ENCODE measurements at regions of chr16 and their contacts with region 1.

Region 1: GRCh38 chr16:68756250-68756915 is 19.3 kb downstream of the CDH1 start:
- DNase-seq: peak; percentile 86
- H3K4me3 Mint-ChIP-seq: peak overlapping the region; percentile 45
- H3K27ac Mint-ChIP-seq: peak overlapping the region; percentile 99
- H3K4me1 Mint-ChIP-seq: peaks cover 54% of the 10 kb centered on the region
- H3K27me3 Mint-ChIP-seq: no peaks in the 10 kb centered on the region

Region 2: DNA sequence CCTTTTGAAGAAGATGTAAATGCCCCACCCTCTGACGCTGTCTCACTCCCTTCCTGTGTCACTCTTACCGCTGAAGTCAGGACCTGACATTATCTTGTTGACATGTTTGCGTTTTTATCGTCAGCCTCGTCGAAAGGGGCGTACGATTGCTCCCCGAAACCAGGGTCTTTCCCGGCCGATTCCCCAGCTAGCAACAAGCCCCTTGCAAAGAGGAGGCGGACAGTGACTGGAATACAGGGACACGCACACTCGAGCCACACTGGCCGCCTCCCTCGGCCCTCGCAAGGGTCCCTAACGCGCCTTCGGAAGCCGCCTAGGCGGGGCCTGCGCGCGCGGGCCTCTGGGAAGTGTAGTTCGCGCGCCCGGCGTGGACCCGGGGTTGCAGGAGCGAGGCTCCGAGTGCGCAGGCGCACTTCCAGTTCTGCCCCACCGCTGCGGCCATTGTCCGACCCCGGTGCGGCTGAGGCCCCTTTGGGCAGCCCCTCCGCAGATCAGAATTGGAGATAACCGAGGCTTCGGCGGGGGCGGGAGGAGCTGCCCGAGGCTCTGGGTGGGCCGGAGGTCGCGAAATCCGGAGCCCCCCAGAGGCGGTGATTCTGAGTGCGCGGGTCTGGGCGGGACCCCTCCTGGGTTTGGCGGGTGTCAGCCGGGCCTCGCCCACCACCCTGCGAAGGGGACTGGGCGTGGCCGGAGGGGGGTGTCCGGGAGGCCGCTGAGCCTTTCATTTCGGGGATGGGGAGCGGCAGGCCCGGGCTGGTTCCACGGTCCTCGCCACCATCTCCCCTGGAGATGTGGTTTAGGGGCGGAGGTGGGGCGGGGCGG is 217.3 kb before region 1 on chr16 and contains the start of gene ZFP90:
- intact Hi-C with region 1: loop called (anchors 5 kb)
- DNase-seq: peak; percentile 96
- H3K4me3 Mint-ChIP-seq: peak within 1 kb of the TSS; percentile 99
- H3K27ac Mint-ChIP-seq: peak within 1 kb of the TSS; percentile 99
- H3K4me1 Mint-ChIP-seq: peaks cover 17% of the 10 kb centered on the region
- H3K27me3 Mint-ChIP-seq: no peaks in the 10 kb centered on the region
- total RNA-seq, gene ZFP90: 19.0 and 20.2 TPM in 2 replicates

Region 3: DNA sequence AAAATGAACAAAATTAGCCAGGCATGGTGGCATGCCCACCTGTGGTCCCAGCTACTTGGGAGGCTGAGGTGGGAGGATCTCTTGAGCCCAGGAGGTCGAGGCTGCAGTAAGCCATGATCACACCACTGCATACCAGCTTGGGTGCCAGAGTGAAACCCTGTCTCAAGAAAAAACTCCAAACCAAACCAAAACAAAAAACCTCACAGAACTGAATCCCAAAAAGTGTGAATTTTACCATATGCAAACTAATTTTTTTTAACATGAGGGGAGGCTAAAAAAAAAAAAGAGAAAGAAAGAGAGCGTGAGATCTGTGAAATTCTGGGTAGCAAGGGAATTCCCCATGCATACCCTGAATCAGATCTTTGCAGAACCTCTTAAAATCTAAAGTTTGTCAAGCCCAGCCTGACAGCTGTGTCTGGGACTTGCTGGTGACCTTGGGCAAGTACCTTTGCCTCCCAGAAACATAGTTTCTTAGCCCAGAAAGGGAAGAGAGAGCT is 36.3 kb before region 1 on chr16:
- intact Hi-C with region 1: loop called (anchors 1 kb)
- DNase-seq: peak; percentile 58
- H3K4me3 Mint-ChIP-seq: no peak overlapping the region
- H3K27ac Mint-ChIP-seq: peak overlapping the region; percentile 16
- H3K4me1 Mint-ChIP-seq: peaks cover 9% of the 10 kb centered on the region
- H3K27me3 Mint-ChIP-seq: no peaks in the 10 kb centered on the region

Region 4: DNA sequence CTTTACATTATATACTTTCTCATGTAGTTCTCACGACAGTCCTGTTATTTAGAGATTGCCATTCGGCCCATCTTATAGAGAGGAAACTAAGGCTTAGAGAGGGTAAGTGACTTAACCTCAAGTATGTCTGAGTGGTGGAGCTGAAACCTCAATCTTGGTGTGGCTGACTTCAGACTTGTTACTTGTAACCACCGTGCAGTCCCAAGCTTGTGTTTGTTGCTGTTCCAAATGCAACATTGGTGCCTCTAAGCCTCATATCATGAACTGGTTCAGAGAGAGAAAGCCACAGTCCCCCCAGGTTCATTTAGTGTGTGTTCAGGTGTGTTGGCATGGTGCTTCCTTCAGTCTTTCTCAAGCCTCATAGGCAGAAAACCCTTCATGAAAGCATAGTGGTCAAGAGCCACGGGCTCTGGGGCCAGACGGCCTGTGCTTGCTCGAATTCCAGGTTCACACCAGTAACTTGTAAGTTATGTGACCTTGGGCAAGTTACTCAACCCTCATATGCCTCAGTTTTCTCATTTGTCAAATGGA is 20.5 kb after region 1 on chr16:
- intact Hi-C with region 1: loop called (anchors 2 kb)
- DNase-seq: peak; percentile 82
- H3K4me3 Mint-ChIP-seq: no peak overlapping the region
- H3K27ac Mint-ChIP-seq: no peak overlapping the region
- H3K4me1 Mint-ChIP-seq: peaks cover 15% of the 10 kb centered on the region
- H3K27me3 Mint-ChIP-seq: peaks cover 15% of the 10 kb centered on the region

Measured in activated CD4-positive, alpha-beta T cell treated with anti-CD3 and anti-CD28 coated beads, Interleukin-2, amount 10 ng/mL, durations not matched to agents 24 days and 14 days (primary cell).